PC-3 (cell line): ENCODE measurements at regions of chr1 and their contacts with region 1.

Region 1: DNA sequence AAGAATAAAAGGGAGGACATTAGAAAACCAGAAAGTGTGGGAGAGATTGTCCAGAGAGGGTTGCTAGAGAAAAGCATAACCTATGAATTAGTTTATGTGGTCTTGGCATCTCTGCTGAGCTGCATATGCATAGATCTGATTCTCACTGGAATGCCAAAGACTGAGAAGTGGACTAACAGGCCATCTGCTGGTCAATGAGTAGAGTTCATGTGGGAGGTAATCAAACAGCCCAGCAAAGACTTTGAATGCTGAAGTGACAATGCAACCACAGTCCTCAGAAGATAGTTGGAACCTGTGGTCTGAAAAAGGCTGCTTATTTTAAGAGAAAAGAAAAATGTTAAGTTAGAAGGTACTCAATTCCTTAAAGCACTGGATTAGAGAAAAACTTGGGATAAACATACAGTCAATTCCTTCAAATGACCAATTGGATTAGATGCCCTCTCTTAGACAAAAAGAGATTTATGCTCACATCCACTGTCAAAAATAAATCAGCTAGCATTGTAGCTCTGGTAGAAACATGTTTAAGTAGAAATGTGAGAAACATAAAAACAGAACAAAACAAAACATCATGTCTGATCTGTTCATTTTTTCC is 382.8 kb downstream of the AMY1C start:
- DNase-seq: peak; percentile 54
- ATAC-seq: peak; percentile 70
- H3K4me3 ChIP-seq: no peak overlapping the region
- H3K27ac ChIP-seq: no peak overlapping the region
- H3K4me1 ChIP-seq: no peaks in the 10 kb centered on the region
- H3K27me3 ChIP-seq: no peaks in the 10 kb centered on the region
- CTCF ChIP-seq: peak; percentile 79

Region 2: GRCh38 chr1:103788377-103788776 is 344.1 kb before region 1 on chr1:
- CTCF ChIA-PET with region 1: no interaction called
- POLR2A ChIA-PET with region 1: no interaction called
- intact Hi-C with region 1: loop called (anchors 1 kb)
- DNase-seq: peak; percentile 60
- ATAC-seq: 0 out of 2 replicates have a peak, but pooled peaks have one; percentile 35
- H3K4me3 ChIP-seq: no peak overlapping the region
- H3K27ac ChIP-seq: no peak overlapping the region
- H3K4me1 ChIP-seq: no peaks in the 10 kb centered on the region
- H3K27me3 ChIP-seq: no peaks in the 10 kb centered on the region
- CTCF ChIP-seq: peak; percentile 67

Region 3: DNA sequence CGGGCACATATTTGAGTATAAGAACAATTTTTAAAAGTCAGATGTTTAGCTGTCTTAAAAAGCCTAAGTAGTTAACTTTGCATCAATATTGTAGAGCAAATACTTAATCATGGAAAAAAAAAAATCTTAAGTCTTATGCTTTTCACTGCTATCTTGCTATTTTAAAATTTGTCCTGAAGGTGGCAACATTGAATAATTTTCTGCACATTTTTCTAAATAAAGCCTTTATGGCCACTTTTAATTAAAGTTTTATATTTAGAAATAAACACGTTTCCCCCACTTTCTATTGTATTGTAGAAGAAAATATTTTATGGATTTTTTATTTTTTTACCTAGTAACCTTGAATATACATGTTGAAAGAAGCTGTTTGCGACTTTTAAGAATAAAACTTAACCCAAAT is 184.0 kb before region 1 on chr1:
- CTCF ChIA-PET with region 1: no interaction called
- POLR2A ChIA-PET with region 1: no interaction called
- intact Hi-C with region 1: loop called (anchors 1 kb)
- DNase-seq: peak; percentile 45
- ATAC-seq: no peak
- H3K4me3 ChIP-seq: no peak overlapping the region
- H3K27ac ChIP-seq: no peak overlapping the region
- H3K4me1 ChIP-seq: no peaks in the 10 kb centered on the region
- H3K27me3 ChIP-seq: peaks cover 12% of the 10 kb centered on the region; the same call in 1 of the 2 replicates
- CTCF ChIP-seq: peak; percentile 68

Region 4: DNA sequence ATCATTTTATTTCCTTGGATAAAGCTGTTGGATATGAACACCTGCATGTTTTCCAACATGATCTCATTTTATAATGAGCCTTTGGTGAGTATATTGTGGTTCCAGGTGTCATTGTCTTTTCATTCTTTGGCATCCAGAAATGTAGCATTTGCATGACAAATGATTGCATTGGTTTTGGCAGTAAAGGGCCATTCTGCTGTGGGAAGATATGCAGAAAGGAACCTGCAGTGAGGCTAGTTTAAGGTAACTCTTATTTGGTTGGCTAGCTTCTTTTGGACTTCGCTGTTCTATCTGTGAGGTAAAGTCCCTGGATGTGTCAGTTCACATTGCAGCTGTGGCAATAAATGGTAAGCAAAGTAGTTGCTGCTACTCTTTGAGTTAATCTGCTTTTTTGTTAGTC is 39.8 kb before region 1 on chr1:
- CTCF ChIA-PET with region 1: no interaction called
- POLR2A ChIA-PET with region 1: no interaction called
- intact Hi-C with region 1: no loop called
- DNase-seq: no peak
- ATAC-seq: no peak
- H3K4me3 ChIP-seq: no peak overlapping the region
- H3K27ac ChIP-seq: no peak overlapping the region
- H3K4me1 ChIP-seq: no peaks in the 10 kb centered on the region
- H3K27me3 ChIP-seq: no peaks in the 10 kb centered on the region
- CTCF ChIP-seq: no peak

Region 5: GRCh38 chr1:104172243-104172708 is 39.8 kb after region 1 on chr1:
- CTCF ChIA-PET with region 1: no interaction called
- POLR2A ChIA-PET with region 1: no interaction called
- intact Hi-C with region 1: no loop called
- DNase-seq: no peak
- ATAC-seq: no peak
- H3K4me3 ChIP-seq: no peak overlapping the region
- H3K27ac ChIP-seq: no peak overlapping the region
- H3K4me1 ChIP-seq: no peaks in the 10 kb centered on the region
- H3K27me3 ChIP-seq: no peaks in the 10 kb centered on the region; the same call in 1 of the 2 replicates
- CTCF ChIP-seq: no peak